Vagina (tissue), 2 donors: ENCODE measurements at regions of chr21 and their contacts with region 1.

Region 1: GRCh38 chr21:27631471-27631870 is 664.6 kb upstream of the ADAMTS5 start:
- DNase-seq: no peak
- H3K4me3 ChIP-seq: no peak overlapping the region
- H3K27ac ChIP-seq: no peak overlapping the region
- H3K4me1 ChIP-seq: no peaks in the 10 kb centered on the region
- H3K27me3 ChIP-seq: no peaks in the 10 kb centered on the region
- CTCF ChIP-seq: no peak
- POLR2A ChIP-seq: no peak

Region 2: GRCh38 chr21:27033471-27033870 is 598.0 kb before region 1 on chr21:
- intact Hi-C with region 1: loop called (anchors 10 kb)
- DNase-seq: no peak
- H3K4me3 ChIP-seq: no peak overlapping the region
- H3K27ac ChIP-seq: no peak overlapping the region
- H3K4me1 ChIP-seq: no peaks in the 10 kb centered on the region
- H3K27me3 ChIP-seq: no peaks in the 10 kb centered on the region
- CTCF ChIP-seq: no peak
- POLR2A ChIP-seq: no peak